Activated CD8-positive, alpha-beta T cell treated with anti-CD3 and anti-CD28 coated beads for 36 hours (primary cell): ENCODE measurements at regions of chr14 and their contacts with region 1.

Region 1: DNA sequence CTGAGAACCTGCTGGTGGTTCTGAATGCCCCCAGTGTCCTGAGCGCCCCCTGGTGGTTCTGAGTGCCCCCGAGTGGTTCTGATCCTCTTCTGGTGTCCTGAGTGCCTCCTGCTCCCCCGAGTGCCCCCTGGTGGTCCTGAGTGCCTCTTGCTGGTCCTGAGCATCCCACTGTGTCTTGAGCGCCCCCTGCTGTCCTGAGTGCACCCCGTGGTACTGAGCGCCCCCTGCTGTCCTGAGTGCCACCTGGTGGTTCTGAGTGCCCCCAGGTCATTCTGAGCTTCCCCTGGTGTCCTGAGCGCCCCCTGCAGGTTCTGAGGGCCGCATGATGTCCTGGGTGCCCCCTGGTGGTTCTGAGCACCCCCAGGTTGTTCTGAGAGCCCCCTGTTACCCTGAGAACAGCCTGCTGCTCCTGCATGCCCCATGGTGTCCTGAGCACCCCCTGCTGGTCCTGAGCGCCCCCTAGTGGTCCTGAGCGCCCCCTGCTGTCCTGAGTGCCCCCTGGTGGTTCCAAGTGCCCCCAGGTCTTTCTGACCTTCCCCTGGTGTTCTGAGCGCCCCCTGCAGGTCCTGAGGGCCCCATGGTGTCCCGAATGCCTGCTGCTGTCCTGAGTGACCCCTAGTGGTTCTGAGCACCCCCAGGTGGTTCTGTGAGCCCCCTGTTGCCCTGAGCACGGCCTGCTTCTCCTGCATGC is 1165.4 kb downstream of the TMEM121 start:
- DNase-seq: peak; percentile 96
- ATAC-seq: peak; percentile 78
- H3K4me3 Mint-ChIP-seq: no peak overlapping the region
- H3K27ac Mint-ChIP-seq: no peak overlapping the region
- H3K4me1 Mint-ChIP-seq: peaks cover 22% of the 10 kb centered on the region
- H3K27me3 Mint-ChIP-seq: peaks cover 2% of the 10 kb centered on the region
- CTCF ChIP-seq: peak; percentile 81

Region 2: GRCh38 chr14:106681568-106681967 is 10.2 kb before region 1 on chr14:
- CTCF ChIA-PET with region 1: interaction called, 44 read pairs
- POLR2A ChIA-PET with region 1: interaction called, 3 read pairs
- intact Hi-C with region 1: no loop called
- DNase-seq: peak; percentile 27
- ATAC-seq: peak; percentile 97
- H3K4me3 Mint-ChIP-seq: no peak overlapping the region
- H3K27ac Mint-ChIP-seq: no peak overlapping the region
- H3K4me1 Mint-ChIP-seq: no peaks in the 10 kb centered on the region
- H3K27me3 Mint-ChIP-seq: peaks cover 13% of the 10 kb centered on the region
- CTCF ChIP-seq: peak; percentile 56

Region 3: GRCh38 chr14:106738075-106738474 is 46.3 kb after region 1 on chr14:
- CTCF ChIA-PET with region 1: interaction called, 11 read pairs
- POLR2A ChIA-PET with region 1: no interaction called
- intact Hi-C with region 1: no loop called
- DNase-seq: peak; percentile 54
- ATAC-seq: no peak
- H3K4me3 Mint-ChIP-seq: no peak overlapping the region
- H3K27ac Mint-ChIP-seq: no peak overlapping the region
- H3K4me1 Mint-ChIP-seq: peaks cover 17% of the 10 kb centered on the region
- H3K27me3 Mint-ChIP-seq: peaks cover 1% of the 10 kb centered on the region
- CTCF ChIP-seq: peak; percentile 65

Region 4: DNA sequence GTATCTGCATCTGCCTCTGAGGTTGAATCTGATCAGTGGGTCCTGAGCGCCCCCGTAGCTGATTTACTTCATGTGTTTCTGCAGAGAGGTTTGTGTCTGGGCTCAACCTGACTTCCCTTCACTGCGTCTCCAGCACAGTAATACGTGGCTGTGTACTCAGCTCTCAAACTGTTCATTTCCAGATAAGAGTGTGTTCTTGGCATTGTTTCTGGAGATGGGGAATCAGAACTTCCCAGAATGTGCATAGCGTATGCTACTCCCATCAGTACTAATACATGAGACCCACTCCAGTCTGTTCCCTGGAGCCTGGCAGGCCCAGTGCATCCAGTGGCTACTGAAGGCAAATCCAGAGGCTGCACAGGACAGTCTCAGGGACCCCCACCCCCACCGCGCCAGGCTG is 131.8 kb after region 1 on chr14:
- CTCF ChIA-PET with region 1: no interaction called
- POLR2A ChIA-PET with region 1: no interaction called
- intact Hi-C with region 1: no loop called
- DNase-seq: no peak
- ATAC-seq: no peak
- H3K4me3 Mint-ChIP-seq: no peak overlapping the region
- H3K27ac Mint-ChIP-seq: no peak overlapping the region
- H3K4me1 Mint-ChIP-seq: peaks cover 1% of the 10 kb centered on the region
- H3K27me3 Mint-ChIP-seq: peaks cover 9% of the 10 kb centered on the region
- CTCF ChIP-seq: no peak